GM13977 (cell line): ENCODE measurements at regions of chr9 and their contacts with region 1.

Region 1: GRCh38 chr9:35729700-35730485 is 2.1 kb downstream of the TLN1 start:
- DNase-seq: no peak
- CTCF ChIP-seq: peak; percentile 53

Region 2: DNA sequence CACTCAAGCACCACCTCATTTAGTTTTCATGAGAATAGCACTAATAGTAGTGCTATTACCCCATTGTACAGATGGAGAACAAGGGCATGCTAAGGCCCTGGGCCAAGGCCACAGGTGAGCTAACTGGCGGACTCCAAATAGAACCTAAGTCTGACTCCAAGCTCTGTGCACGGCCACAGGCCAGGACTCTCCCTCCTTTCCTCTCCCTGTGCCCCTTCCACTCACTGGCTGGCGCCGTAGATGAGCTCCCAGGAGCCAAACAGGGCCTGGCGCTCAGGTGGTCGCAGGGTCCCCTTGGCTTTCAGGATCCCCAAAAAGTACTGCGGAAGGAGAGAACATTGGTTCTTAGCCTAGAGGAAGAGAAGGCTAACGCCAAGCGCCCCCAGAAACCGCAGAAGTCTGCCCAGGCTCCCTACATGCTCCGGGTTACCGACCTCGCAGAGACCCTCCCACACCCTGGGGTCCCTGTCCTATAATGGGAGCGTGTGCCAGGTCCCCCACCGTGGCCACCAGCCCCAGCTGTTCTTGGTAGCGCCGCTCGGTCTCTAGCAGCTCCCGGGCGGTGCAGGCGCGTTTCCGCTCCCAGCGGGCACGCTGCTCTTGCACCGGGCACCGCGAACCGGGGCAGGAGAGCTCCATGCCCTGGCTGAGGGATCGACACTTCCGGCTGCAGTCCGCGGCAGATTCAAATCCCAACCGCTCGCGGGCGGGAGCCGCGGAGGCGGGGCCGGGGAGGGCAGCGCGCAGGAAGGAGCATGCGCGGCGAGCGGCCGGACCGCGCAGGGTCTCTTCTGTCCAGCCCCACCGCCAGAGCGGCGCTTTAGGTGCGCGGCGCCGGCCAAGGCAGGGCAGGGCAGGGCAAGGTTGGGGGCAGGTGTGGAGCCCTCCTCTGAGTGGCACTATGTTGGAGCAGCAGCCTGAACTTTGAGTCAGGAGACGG is 65.1 kb before region 1 on chr9 and contains the start of gene ARHGEF39:
- in situ Hi-C with region 1: loop called (anchors 10 kb)
- DNase-seq: peak; percentile 93
- CTCF ChIP-seq: peak; percentile 58